ENCODE measurements at regions of chr6 and their contacts with region 1.

Region 1: DNA sequence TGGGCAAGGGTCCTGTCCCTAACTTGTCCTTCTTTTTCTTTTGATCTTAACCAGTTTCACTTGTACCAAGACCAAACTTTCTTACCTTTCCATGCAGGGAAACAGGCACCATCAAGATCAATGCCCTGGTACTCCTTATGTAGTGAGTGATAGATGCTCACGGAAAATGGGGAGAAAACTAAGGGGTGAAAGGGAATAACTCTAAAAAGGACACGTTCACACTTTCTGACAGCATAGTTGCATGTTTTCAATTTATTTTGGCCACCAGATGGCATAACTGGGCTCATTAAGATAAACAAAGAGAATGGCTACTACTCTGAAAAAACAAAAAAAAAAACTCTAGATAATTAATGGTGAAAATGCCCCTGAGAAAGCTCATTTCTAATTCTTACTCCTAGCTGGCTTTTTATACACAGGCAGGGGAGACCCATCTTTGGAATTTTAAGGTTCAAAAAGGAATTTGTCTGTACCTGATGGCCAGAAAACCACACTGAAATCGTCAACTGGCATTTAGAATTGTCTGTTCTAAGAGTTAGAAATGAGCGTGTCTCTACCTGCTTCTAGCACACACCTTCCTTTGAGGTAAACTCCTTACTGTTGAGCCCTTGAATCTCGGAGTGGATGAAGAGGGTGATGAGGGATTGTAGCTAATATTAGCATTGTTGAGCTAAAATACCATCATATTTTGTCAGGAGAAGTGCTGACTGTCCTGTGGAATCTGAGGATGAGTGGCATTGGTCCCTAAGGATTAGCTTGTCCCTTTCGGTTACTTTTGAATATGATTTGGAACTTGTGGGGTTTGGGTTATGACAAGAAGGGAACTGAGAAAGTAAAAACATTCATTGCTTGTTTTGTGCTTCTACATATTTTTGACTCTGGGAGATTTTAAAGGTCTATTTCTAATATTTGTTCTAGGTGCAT is 62.2 kb upstream of the DDR1 start:
- DNase-seq: no peak
- ATAC-seq: peak; percentile 40
- H3K4me3 Mint-ChIP-seq: no peak overlapping the region
- H3K27ac Mint-ChIP-seq: peak overlapping the region; percentile 10
- H3K4me1 Mint-ChIP-seq: peaks cover 51% of the 10 kb centered on the region
- H3K27me3 Mint-ChIP-seq: no peaks in the 10 kb centered on the region

Region 2: GRCh38 chr6:30787954-30788353 is 34.2 kb before region 1 on chr6:
- CTCF ChIA-PET with region 1: interaction called, 14 read pairs
- DNase-seq: no peak
- ATAC-seq: peak; percentile 63
- H3K4me3 Mint-ChIP-seq: no peak overlapping the region
- H3K27ac Mint-ChIP-seq: peak overlapping the region; percentile 18
- H3K4me1 Mint-ChIP-seq: peaks cover 50% of the 10 kb centered on the region
- H3K27me3 Mint-ChIP-seq: no peaks in the 10 kb centered on the region

Region 3: GRCh38 chr6:30836431-30836866 is 14.3 kb after region 1 on chr6:
- CTCF ChIA-PET with region 1: interaction called, 43 read pairs
- DNase-seq: no peak
- ATAC-seq: no peak
- H3K4me3 Mint-ChIP-seq: no peak overlapping the region
- H3K27ac Mint-ChIP-seq: no peak overlapping the region
- H3K4me1 Mint-ChIP-seq: peaks cover 27% of the 10 kb centered on the region
- H3K27me3 Mint-ChIP-seq: no peaks in the 10 kb centered on the region

Region 4: GRCh38 chr6:30907758-30908591 is 85.9 kb after region 1 on chr6 and contains the start of gene GTF2H4:
- CTCF ChIA-PET with region 1: interaction called, 42 read pairs
- DNase-seq: peak; percentile 98
- ATAC-seq: peak; percentile 98
- H3K4me3 Mint-ChIP-seq: peak within 1 kb of the TSS; percentile 97
- H3K27ac Mint-ChIP-seq: peak within 1 kb of the TSS; percentile 78
- H3K4me1 Mint-ChIP-seq: peaks cover 19% of the 10 kb centered on the region
- H3K27me3 Mint-ChIP-seq: no peaks in the 10 kb centered on the region
- total RNA-seq, gene GTF2H4: 30.0 to 34.9 TPM

Region 5: GRCh38 chr6:31114970-31115849 is 293.1 kb after region 1 on chr6:
- CTCF ChIA-PET with region 1: no interaction called
- DNase-seq: no peak
- ATAC-seq: no peak
- H3K4me3 Mint-ChIP-seq: no peak overlapping the region
- H3K27ac Mint-ChIP-seq: no peak overlapping the region
- H3K4me1 Mint-ChIP-seq: no peaks in the 10 kb centered on the region
- H3K27me3 Mint-ChIP-seq: peaks cover 36% of the 10 kb centered on the region

Measured in activated CD8-positive, alpha-beta memory T cell treated with anti-CD3 and anti-CD28 coated beads, Interleukin-2, amount 10 ng/mL, durations not matched to agents 7 days and 5 days (primary cell).